Activated CD8-positive, alpha-beta memory T cell treated with anti-CD3 and anti-CD28 coated beads, Interleukin-2, amount 10 ng/mL, durations not matched to agents 7 days and 5 days (primary cell): ENCODE measurements at regions of chr1 and their contacts with region 1.

Region 1: GRCh38 chr1:156212833-156213643 is at the start of gene PMF1:
- DNase-seq: peak; percentile 99
- ATAC-seq: peak; percentile 97
- H3K4me3 Mint-ChIP-seq: peak within 1 kb of the TSS; percentile 97
- H3K27ac Mint-ChIP-seq: peak within 1 kb of the TSS; percentile 98
- H3K4me1 Mint-ChIP-seq: peaks cover 40% of the 10 kb centered on the region
- H3K27me3 Mint-ChIP-seq: no peaks in the 10 kb centered on the region
- total RNA-seq, gene PMF1: 62.8 to 72.5 TPM

Region 2: GRCh38 chr1:156119503-156120209 is 93.4 kb before region 1 on chr1:
- CTCF ChIA-PET with region 1: no interaction called
- DNase-seq: no peak
- ATAC-seq: no peak
- H3K4me3 Mint-ChIP-seq: no peak overlapping the region
- H3K27ac Mint-ChIP-seq: peak overlapping the region; percentile 64
- H3K4me1 Mint-ChIP-seq: peaks cover 44% of the 10 kb centered on the region
- H3K27me3 Mint-ChIP-seq: peaks cover 10% of the 10 kb centered on the region

Region 3: GRCh38 chr1:156146020-156146768 is 66.8 kb before region 1 on chr1:
- CTCF ChIA-PET with region 1: interaction called, 15 read pairs
- DNase-seq: peak; percentile 70
- ATAC-seq: peak; percentile 90
- H3K4me3 Mint-ChIP-seq: peak overlapping the region; percentile 63
- H3K27ac Mint-ChIP-seq: peak overlapping the region; percentile 91
- H3K4me1 Mint-ChIP-seq: peaks cover 35% of the 10 kb centered on the region
- H3K27me3 Mint-ChIP-seq: no peaks in the 10 kb centered on the region

Region 4: DNA sequence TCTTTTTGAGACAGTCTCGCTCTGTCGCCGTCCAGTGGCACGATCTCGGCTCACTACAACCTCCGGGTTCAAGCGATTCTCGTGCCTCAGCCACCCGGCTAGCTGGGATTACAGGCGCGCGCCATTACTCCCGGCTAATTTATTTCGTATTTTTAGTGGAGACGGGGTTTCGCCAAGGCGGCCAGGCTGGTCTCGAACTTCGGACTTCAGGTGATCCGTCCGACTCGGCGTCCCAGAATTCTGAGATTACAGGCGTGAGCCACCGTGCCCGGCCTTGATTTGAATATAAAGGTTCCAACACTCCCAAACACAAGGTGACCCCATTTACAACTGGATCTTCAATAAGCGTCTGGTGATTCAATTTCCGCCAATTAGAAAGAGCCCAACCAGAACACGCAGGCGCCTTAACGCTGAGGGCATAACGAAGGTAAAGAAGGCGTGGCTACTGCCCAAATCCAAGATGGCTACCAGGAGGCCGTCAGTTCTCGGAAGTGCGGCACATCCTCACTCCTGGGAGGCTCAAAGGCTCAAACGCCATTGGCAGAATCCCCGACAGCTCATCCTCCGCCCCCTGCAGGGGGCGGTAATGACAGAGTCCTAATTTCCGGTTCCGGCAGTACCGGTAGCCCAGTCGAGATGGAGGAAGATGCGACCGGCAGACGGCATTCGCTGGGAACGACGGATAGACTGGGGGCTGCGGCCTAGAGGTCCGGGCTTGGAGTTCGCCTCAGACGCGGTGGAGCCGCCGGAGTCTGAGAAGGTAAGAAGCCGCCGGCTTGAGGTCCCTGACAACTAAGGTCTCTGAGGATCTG is 19.3 kb before region 1 on chr1 and contains the start of gene SLC25A44:
- CTCF ChIA-PET with region 1: interaction called, 12 read pairs
- DNase-seq: peak; percentile 99
- ATAC-seq: peak; percentile 97
- H3K4me3 Mint-ChIP-seq: peak within 1 kb of the TSS; percentile 96
- H3K27ac Mint-ChIP-seq: peak within 1 kb of the TSS; percentile 95
- H3K4me1 Mint-ChIP-seq: peaks cover 55% of the 10 kb centered on the region
- H3K27me3 Mint-ChIP-seq: no peaks in the 10 kb centered on the region
- total RNA-seq, gene SLC25A44: 41.4 to 48.4 TPM

Region 5: DNA sequence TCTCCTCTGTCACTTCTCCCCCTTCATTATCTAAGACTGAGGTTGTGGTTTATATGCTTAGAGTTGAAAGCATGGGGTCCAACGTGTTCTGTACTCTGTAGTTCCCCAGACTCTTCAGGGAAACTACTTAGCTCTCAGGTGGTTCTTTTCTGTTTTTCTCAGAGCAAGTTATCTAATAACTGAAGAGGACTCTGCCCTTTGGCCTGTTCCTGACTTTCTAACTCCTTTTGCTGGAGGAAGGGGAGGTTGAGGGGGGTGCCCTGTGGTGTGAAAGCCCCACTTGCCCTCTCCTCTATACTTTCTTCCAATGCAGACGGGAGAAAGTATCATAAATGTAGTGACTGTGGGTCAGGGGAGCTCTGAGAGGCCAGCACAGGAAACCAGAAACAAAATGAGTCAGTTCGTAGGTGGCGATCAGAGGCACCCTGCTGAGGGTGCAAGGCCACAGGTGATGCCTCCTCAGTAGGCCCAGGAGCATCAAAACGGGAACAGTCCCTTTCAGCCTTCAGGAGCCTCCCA is 14.1 kb before region 1 on chr1:
- CTCF ChIA-PET with region 1: interaction called, 12 read pairs
- DNase-seq: peak; percentile 63
- ATAC-seq: peak; percentile 73
- H3K4me3 Mint-ChIP-seq: peak overlapping the region; percentile 40
- H3K27ac Mint-ChIP-seq: peak overlapping the region; percentile 88
- H3K4me1 Mint-ChIP-seq: peaks cover 64% of the 10 kb centered on the region
- H3K27me3 Mint-ChIP-seq: no peaks in the 10 kb centered on the region

Region 6: DNA sequence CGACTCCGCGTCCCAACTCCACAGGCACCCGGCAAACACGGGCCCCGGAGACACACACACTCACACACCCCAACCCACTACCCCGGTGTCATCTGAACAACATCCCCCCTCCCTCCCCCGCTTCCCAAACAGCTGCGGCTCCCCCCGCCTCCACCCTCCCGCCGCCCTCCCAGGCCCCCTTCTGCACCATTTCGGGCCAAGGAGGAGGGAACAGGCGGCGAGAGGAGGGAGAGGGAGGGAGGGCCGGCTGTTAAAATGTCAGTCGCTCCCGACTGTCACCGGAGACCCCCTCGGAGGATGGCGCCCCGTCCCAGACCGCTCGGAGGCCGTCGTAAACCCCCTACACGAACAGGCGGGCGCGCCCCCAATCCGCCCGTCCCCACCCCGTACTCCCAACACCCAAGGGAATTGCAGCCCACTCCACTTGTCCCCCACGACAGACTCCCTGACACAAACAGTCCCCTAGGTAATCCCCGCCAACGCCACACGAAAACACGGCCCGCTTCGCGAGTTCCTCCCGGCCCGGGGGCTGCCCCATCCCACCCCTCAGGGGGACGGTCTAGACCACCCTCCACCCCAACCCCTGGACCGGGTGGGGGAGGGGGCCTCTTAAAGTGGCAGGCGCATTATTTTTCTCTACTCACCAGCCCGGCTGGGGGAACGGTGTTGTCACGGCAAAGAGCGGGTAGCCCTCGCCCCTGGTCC is 287.0 kb after region 1 on chr1:
- CTCF ChIA-PET with region 1: no interaction called
- DNase-seq: peak; percentile 62
- ATAC-seq: peak; percentile 0
- H3K4me3 Mint-ChIP-seq: peak overlapping the region; percentile 88
- H3K27ac Mint-ChIP-seq: peak overlapping the region; percentile 87
- H3K4me1 Mint-ChIP-seq: peaks cover 74% of the 10 kb centered on the region
- H3K27me3 Mint-ChIP-seq: no peaks in the 10 kb centered on the region